Mammary epithelial cell (primary cell): ENCODE measurements at regions of chr16 and their contacts with region 1.

Region 1: DNA sequence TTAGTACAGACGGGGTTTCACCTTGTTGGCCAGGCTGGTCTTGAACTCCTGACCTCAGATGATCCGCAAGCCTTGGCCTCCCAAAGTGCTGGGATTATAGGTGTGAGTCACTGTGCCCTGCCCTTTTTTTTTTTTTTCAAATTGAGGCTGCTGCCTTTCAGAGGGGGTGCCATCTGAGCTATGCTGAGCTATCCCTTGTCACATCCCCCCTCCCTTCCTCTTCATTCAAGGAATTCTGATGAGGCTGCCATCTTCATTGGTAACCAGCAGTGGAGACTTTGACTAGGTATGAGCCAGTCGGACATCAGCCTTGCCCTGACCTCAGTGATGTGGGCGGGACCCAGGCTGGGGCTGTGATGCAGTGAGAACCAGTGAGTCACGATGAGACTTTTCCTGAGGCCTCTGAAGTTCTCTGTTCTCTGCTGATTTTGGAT is 24.4 kb upstream of the GPT2 start:
- DNase-seq: peak; percentile 95
- H3K4me3 ChIP-seq: no peak overlapping the region
- H3K27ac ChIP-seq: peak overlapping the region; percentile 38
- H3K4me1 ChIP-seq: peaks cover 18% of the 10 kb centered on the region
- H3K27me3 ChIP-seq: no peaks in the 10 kb centered on the region
- CTCF ChIP-seq: no peak

Region 2: GRCh38 chr16:46658925-46659324 is 200.8 kb before region 1 on chr16:
- CTCF ChIA-PET with region 1: no interaction called
- dilution Hi-C with region 1: no loop called
- in situ Hi-C with region 1: no loop called
- intact Hi-C with region 1: no loop called
- DNase-seq: no peak
- H3K4me3 ChIP-seq: no peak overlapping the region
- H3K27ac ChIP-seq: no peak overlapping the region
- H3K4me1 ChIP-seq: no peaks in the 10 kb centered on the region
- H3K27me3 ChIP-seq: no peaks in the 10 kb centered on the region
- CTCF ChIP-seq: no peak

Region 3: GRCh38 chr16:46883690-46884512 is 24.2 kb after region 1 on chr16 and contains the start of gene GPT2:
- CTCF ChIA-PET with region 1: interaction called, 6 read pairs
- dilution Hi-C with region 1: no loop called
- in situ Hi-C with region 1: no loop called
- intact Hi-C with region 1: loop called (anchors 1 kb)
- DNase-seq: peak; percentile 95
- H3K4me3 ChIP-seq: peak within 1 kb of the TSS; percentile 64 to 91 (median 91)
- H3K27ac ChIP-seq: peak within 1 kb of the TSS; percentile 74
- H3K4me1 ChIP-seq: peaks cover 23% of the 10 kb centered on the region
- H3K27me3 ChIP-seq: no peaks in the 10 kb centered on the region
- CTCF ChIP-seq: no peak
- total RNA-seq, gene GPT2: 59.9 to 81.5 TPM

Region 4: GRCh38 chr16:46954562-46954961 is 94.8 kb after region 1 on chr16:
- CTCF ChIA-PET with region 1: interaction called, 8 read pairs
- dilution Hi-C with region 1: loop called (anchors 5 kb)
- in situ Hi-C with region 1: no loop called
- intact Hi-C with region 1: no loop called
- DNase-seq: no peak
- H3K4me3 ChIP-seq: no peak overlapping the region
- H3K27ac ChIP-seq: no peak overlapping the region
- H3K4me1 ChIP-seq: no peaks in the 10 kb centered on the region
- H3K27me3 ChIP-seq: no peaks in the 10 kb centered on the region
- CTCF ChIP-seq: no peak